A549 (cell line): ENCODE measurements at regions of chr16 and their contacts with region 1.

Region 1: GRCh38 chr16:23556881-23557778 is at the starts of genes EARS2 and UBFD1:
- DNase-seq: peak; percentile 92 to 98
- ATAC-seq: peak; percentile 97 to 98
- H3K4me3 ChIP-seq: peak within 1 kb of the TSS; percentile 88
- H3K27ac ChIP-seq: peak within 1 kb of the TSS; percentile 86 to 95
- H3K4me1 ChIP-seq: peaks cover 24% of the 10 kb centered on the region
- CTCF ChIP-seq: peak; percentile 79
- EP300 ChIP-seq: no peak
- POLR2A ChIP-seq: peak; percentile 57; the same call in 1 of the 2 replicates
- RAD21 ChIP-seq: peak; percentile 29 to 46; a peak in 3 of 5 replicates
- polyA plus RNA-seq, gene EARS2: 45.2 and 68.6 TPM in 2 replicates
- polyA plus RNA-seq, gene UBFD1: 75.2 and 78.0 TPM in 2 replicates

Region 2: DNA sequence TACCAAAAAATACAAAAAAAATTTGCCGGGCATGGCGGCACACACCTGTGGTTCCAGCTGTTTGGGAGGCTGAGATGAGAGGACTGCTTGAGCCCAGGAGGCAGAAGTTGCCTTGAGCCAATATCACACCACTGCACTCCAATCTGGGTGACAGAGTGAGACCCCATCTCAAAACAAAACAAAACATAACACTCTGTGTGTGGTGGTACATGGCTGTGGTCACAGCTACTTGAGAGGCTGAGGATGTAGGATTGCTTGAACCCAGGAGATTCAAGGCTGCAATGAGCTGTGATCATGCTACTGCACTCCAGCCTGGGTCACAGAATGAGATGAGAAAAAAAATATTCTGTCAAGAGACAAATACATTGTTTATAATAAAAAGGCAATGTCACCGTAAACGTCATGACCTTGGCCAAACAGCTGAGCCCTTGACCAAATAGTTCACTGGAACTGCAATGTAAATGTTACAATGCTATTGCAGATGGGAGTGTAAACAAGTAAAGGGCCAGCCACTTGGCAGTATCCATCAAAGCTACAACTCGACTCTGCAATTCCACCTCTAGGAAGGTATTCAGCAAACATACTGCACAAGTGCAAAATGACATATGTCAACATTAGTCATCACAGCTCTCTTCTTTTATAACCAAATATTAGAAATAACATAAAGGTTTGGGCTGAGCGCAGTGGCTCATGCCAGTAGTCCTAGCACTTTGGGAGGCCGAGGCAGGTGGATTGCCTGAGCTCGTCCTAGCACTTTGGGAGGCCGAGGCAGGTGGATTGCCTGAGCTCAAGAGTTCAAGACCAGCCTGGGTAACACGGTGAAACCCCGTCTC is 16.9 kb before region 1 on chr16:
- CTCF ChIA-PET with region 1: interaction called, 19 read pairs
- POLR2A ChIA-PET with region 1: interaction called, 12 read pairs
- DNase-seq: peak; percentile 37 to 77
- ATAC-seq: peak; percentile 79 to 89
- H3K4me3 ChIP-seq: no peak overlapping the region
- H3K27ac ChIP-seq: peak overlapping the region; percentile 58 to 79
- H3K4me1 ChIP-seq: peaks cover 43% of the 10 kb centered on the region
- CTCF ChIP-seq: no peak
- EP300 ChIP-seq: peak; percentile 48 to 49; a peak in 1 of 5 replicates
- POLR2A ChIP-seq: no peak
- RAD21 ChIP-seq: no peak

Region 3: GRCh38 chr16:23570992-23571632 is 14.0 kb after region 1 on chr16:
- CTCF ChIA-PET with region 1: interaction called, 20 read pairs
- POLR2A ChIA-PET with region 1: interaction called, 6 read pairs
- DNase-seq: no peak
- ATAC-seq: no peak
- H3K4me3 ChIP-seq: no peak overlapping the region
- H3K27ac ChIP-seq: no peak overlapping the region
- H3K4me1 ChIP-seq: no peaks in the 10 kb centered on the region
- CTCF ChIP-seq: no peak
- EP300 ChIP-seq: no peak
- POLR2A ChIP-seq: no peak
- RAD21 ChIP-seq: no peak